Caco-2 (cell line): ENCODE measurements at regions of chr6 and their contacts with region 1.

Region 1: DNA sequence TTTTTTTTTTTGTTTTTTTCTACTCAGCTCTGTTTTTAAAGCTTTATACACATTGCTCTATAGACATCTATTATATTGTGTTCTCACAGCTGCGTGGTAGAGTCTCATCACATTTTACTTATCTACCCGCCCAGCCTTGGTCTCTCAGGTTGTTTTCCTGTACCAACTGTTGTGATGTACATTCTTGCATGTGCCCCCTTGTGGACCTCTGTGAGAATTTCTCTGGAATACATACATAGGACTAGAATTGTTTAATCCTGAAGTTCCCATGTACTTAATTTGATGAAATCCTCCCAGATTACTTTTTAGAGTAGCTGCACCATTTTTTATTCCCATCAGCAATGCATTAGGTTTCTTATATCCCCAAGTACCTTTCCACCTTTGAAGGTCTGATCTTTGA is 40.4 kb upstream of the TINAG start:
- DNase-seq: peak; percentile 40 to 51
- H3K4me3 ChIP-seq: no peak overlapping the region
- H3K4me3 Mint-ChIP-seq: no peak overlapping the region
- H3K27ac Mint-ChIP-seq: no peak overlapping the region
- H3K4me1 ChIP-seq: 0 out of 2 replicates have a peak, but pooled peaks cover 5% of the 10 kb centered on the region
- H3K4me1 Mint-ChIP-seq: no peaks in the 10 kb centered on the region
- H3K27me3 ChIP-seq: no peaks in the 10 kb centered on the region
- H3K27me3 Mint-ChIP-seq: no peaks in the 10 kb centered on the region
- CTCF ChIP-seq: peak; percentile 63 to 78

Region 2: GRCh38 chr6:53979468-53980067 is 288.2 kb before region 1 on chr6:
- CTCF ChIA-PET with region 1: interaction called, 5 read pairs
- POLR2A ChIA-PET with region 1: no interaction called
- intact Hi-C with region 1: loop called (anchors 2 kb)
- DNase-seq: peak in 1 of 2 experiments; percentile 53
- H3K4me3 ChIP-seq: no peak overlapping the region
- H3K4me3 Mint-ChIP-seq: no peak overlapping the region
- H3K27ac Mint-ChIP-seq: no peak overlapping the region
- H3K4me1 ChIP-seq: no peaks in the 10 kb centered on the region
- H3K4me1 Mint-ChIP-seq: no peaks in the 10 kb centered on the region
- H3K27me3 ChIP-seq: no peaks in the 10 kb centered on the region
- H3K27me3 Mint-ChIP-seq: no peaks in the 10 kb centered on the region
- CTCF ChIP-seq: peak; percentile 73 to 77

Region 3: DNA sequence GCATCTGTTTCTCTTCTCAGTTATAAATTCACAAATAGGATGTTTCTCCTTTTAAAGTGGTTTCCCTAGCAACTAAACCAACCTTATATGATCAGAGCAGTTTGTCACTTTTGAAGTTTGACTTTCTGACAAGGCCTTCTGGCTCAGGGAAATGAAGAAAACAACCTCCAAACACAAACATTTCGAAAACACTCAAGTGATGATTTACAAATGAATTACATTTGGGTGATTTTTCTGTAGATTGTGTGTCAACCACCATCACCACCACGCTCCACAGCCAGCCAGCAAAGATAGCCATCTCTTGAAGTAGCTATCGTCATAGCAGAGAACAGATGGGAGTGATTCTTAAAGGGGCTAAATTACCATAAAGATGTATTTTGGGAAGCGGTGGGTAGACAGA is 173.0 kb before region 1 on chr6:
- CTCF ChIA-PET with region 1: no interaction called
- POLR2A ChIA-PET with region 1: no interaction called
- intact Hi-C with region 1: loop called (anchors 10 kb)
- DNase-seq: no peak
- H3K4me3 ChIP-seq: no peak overlapping the region
- H3K4me3 Mint-ChIP-seq: no peak overlapping the region
- H3K27ac Mint-ChIP-seq: no peak overlapping the region
- H3K4me1 ChIP-seq: no peaks in the 10 kb centered on the region
- H3K4me1 Mint-ChIP-seq: no peaks in the 10 kb centered on the region
- H3K27me3 ChIP-seq: no peaks in the 10 kb centered on the region
- H3K27me3 Mint-ChIP-seq: peaks cover 8% of the 10 kb centered on the region
- CTCF ChIP-seq: no peak